Sigmoid colon (tissue), 7 donors: ENCODE measurements at regions of chr6 and their contacts with region 1.

Region 1: DNA sequence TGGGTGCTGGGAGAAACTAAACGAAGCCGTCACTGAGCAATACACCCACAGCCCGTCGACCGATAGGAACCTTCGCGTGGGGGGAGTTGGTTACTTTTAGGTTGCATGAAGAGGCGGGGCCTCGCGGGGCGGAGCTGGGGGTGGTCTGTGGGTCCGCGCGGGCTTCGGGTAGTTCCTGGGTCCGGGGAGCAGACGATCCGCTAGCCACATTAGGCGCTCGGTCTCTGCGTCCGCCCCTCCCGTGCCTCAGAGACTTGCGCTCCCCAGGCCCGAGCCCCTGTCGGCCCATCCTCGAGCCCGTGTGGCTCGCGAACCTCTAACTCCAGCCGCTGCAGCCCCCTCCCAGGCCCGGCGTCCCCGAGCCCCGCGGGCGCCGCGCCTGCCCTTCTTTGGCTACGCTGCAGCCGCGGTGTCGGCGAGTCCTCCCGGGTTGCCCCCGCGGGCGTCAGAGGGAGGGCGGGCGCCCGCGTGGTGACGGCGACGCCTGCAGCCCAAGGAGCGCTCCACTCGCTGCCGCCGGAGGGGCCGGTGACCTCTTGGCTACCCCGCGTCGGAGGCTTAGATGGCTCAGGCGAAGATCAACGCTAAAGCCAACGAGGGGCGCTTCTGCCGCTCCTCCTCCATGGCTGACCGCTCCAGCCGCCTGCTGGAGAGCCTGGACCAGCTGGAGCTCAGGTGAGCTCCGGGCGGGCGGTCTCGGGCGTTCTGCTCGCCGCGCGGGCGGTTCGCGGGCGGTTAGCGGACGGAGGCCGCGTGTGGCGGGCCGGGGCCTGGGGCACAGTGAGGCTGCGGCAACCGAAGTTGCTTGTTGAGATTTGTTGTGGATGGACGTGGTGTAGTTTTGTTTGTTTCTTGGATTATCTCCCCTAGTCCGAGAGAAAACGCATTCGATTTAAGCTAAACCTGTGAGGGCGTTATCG is at the start of gene BAG2:
- DNase-seq: peak; percentile 97
- H3K4me3 ChIP-seq: peak within 1 kb of the TSS; percentile 65 to 88 (median 74)
- H3K27ac ChIP-seq: peak within 1 kb of the TSS; percentile 89 to 99 (median 92)
- H3K4me1 ChIP-seq: peaks cover 0 to 35% (median 29%) of the 10 kb centered on the region in 4 donors
- H3K27me3 ChIP-seq: no peaks in the 10 kb centered on the region
- CTCF ChIP-seq: peak in 3 of 4 experiments; percentile 15 to 49 (median 26)
- EP300 ChIP-seq: no peak
- POLR2A ChIP-seq: peak; percentile 63 to 75
- total RNA-seq, gene BAG2: 55.6 to 74.5 (median 60.0) TPM

Region 2: GRCh38 chr6:57021086-57021720 is 151.2 kb before region 1 on chr6:
- intact Hi-C with region 1: no loop called
- DNase-seq: no peak
- H3K4me3 ChIP-seq: no peak overlapping the region
- H3K27ac ChIP-seq: no peak overlapping the region
- H3K4me1 ChIP-seq: no peaks in the 10 kb centered on the region
- H3K27me3 ChIP-seq: no peaks in the 10 kb centered on the region
- CTCF ChIP-seq: peak in 3 of 4 experiments; percentile 29 to 61 (median 49)
- EP300 ChIP-seq: no peak
- POLR2A ChIP-seq: no peak

Region 3: DNA sequence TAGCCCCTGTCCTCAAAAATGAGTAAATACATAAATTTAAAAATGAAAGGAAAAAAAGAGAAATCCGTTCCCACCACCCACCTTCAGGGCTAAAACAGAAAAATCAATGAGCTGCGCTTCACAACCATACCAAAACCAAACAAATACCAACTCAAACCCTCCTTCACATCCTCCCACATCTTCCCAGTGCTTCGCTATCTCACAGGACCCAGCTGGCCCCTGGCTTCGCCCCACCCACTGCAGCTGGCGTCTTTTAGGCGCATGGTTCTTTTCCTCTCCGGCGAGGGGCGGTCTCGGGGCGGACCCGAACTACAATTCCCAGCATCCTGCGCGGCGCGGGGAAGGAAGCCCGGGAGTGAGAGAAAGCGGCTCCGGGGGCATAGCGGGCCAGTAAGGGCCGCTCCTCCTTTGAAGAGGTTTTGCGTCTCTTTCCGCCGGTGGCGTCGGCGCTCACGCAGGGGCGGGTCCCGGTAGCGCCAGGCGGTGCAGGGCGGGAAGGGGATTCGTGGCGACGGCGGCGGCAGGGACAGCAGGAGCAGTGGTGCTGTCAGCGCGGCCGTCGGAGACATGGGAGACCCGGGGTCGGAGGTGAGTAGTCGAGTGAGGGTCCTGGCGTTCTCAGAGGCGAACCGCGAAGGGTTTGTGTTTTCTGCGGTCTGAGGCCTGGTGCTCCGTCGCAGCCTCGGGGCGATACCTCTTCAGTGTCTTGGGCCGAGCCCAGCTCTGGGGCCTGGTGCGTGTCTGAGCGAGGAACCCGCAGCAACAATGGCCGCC is 82.5 kb before region 1 on chr6 and contains the start of gene ZNF451:
- intact Hi-C with region 1: loop called (anchors 5 kb)
- DNase-seq: peak; percentile 99
- H3K4me3 ChIP-seq: peak within 1 kb of the TSS; percentile 50 to 61 (median 56)
- H3K27ac ChIP-seq: peak within 1 kb of the TSS; percentile 85 to 90 (median 88)
- H3K4me1 ChIP-seq: peaks cover 0 to 42% (median 31%) of the 10 kb centered on the region in 4 donors
- H3K27me3 ChIP-seq: no peaks in the 10 kb centered on the region
- CTCF ChIP-seq: no peak
- EP300 ChIP-seq: peak in 1 of 4 donors; percentile 67
- POLR2A ChIP-seq: peak; percentile 81 to 92
- total RNA-seq, gene ZNF451: 56.6 to 70.1 (median 62.9) TPM

Region 4: DNA sequence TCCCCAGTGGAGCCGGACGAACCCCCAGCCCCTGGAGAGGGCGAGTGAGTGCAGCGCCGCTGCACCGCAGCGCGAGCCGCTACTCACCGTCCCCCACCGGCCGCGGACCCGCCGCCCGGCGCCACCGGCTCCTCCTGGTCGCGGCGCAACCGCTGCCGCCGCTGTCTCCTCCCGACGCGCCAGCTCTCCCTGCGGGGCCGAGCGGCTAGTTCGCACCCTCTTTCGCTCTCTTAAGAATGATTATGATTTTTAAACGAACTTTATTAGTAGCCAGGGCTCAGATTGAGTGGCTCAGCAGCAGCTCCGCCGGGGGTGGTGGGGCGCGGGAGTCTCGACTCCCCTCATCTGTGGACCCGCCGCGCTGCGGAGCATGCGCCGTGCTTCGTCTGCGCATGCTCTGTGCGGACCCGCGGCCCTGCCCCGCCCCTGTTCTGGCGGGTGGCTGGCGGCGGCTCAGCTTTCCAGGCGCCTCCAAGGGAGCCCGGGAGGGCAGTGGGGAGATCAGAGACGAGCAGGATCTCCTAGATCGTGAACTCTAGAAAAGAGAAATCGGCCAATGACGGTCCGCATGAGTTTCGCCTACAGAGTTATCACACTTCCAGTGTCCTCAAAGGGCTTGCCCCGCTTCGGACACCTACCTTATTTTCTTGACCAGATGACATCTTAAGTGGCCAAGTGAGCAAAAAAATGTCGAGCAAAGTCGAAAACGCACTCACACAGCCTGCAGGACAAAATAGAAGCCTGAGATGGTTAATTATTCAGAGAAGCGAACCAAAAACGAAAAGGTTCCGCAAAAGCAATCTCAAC is 49.7 kb after region 1 on chr6 and contains the start of gene RAB23:
- intact Hi-C with region 1: loop called (anchors 2 kb)
- DNase-seq: peak; percentile 94
- H3K4me3 ChIP-seq: peak within 1 kb of the TSS; percentile 87 to 97 (median 90)
- H3K27ac ChIP-seq: peak within 1 kb of the TSS; percentile 94 to 100 (median 96)
- H3K4me1 ChIP-seq: peaks cover 0 to 74% (median 31%) of the 10 kb centered on the region in 4 donors
- H3K27me3 ChIP-seq: no peaks in the 10 kb centered on the region
- CTCF ChIP-seq: no peak
- EP300 ChIP-seq: no peak
- POLR2A ChIP-seq: peak; percentile 92 to 98
- total RNA-seq, gene RAB23: 115 to 188 (median 167) TPM

Region 5: GRCh38 chr6:57262901-57263694 is 90.7 kb after region 1 on chr6:
- intact Hi-C with region 1: loop called (anchors 2 kb)
- DNase-seq: peak; percentile 82
- H3K4me3 ChIP-seq: peak overlapping the region in 1 of 4 donors; percentile 4
- H3K27ac ChIP-seq: peak overlapping the region; percentile 77 to 95 (median 90)
- H3K4me1 ChIP-seq: peaks cover 0 to 92% (median 74%) of the 10 kb centered on the region in 4 donors
- H3K27me3 ChIP-seq: no peaks in the 10 kb centered on the region
- CTCF ChIP-seq: no peak
- EP300 ChIP-seq: peak; percentile 22 to 73 (median 61)
- POLR2A ChIP-seq: no peak